CD8-positive, alpha-beta memory T cell (primary cell): ENCODE measurements at regions of chr6 and their contacts with region 1.

Region 1: GRCh38 chr6:132768051-132768517 is 10.4 kb upstream of the VNN2 start:
- DNase-seq: peak in 3 of 5 donors; percentile 2 to 49 (median 8)
- H3K4me3 ChIP-seq: no peak overlapping the region
- H3K4me3 Mint-ChIP-seq: peak overlapping the region in 2 of 7 donors; percentile 52 to 64
- H3K27ac ChIP-seq: no peak overlapping the region
- H3K27ac Mint-ChIP-seq: no peak overlapping the region
- H3K4me1 ChIP-seq: peaks cover 8% of the 10 kb centered on the region
- H3K4me1 Mint-ChIP-seq: peaks cover 12 to 19% (median 15%) of the 10 kb centered on the region in 3 donors
- H3K27me3 ChIP-seq: no peaks in the 10 kb centered on the region
- H3K27me3 Mint-ChIP-seq: no peaks in the 10 kb centered on the region

Region 2: GRCh38 chr6:132669690-132670291 is 98.3 kb before region 1 on chr6:
- CTCF ChIA-PET with region 1: interaction called, 26 read pairs
- POLR2A ChIA-PET with region 1: no interaction called
- DNase-seq: peak in 2 of 5 donors; percentile 24 to 30
- H3K4me3 ChIP-seq: no peak overlapping the region
- H3K4me3 Mint-ChIP-seq: peak overlapping the region in 1 of 7 donors; percentile 54
- H3K27ac ChIP-seq: no peak overlapping the region
- H3K27ac Mint-ChIP-seq: peak overlapping the region in 2 of 8 donors; percentile 25 to 68
- H3K4me1 ChIP-seq: no peaks in the 10 kb centered on the region
- H3K4me1 Mint-ChIP-seq: peaks cover 3 to 4% (median 3%) of the 10 kb centered on the region in 3 donors
- H3K27me3 ChIP-seq: no peaks in the 10 kb centered on the region
- H3K27me3 Mint-ChIP-seq: peaks cover 0 to 5% of the 10 kb centered on the region in 2 donors

Region 3: DNA sequence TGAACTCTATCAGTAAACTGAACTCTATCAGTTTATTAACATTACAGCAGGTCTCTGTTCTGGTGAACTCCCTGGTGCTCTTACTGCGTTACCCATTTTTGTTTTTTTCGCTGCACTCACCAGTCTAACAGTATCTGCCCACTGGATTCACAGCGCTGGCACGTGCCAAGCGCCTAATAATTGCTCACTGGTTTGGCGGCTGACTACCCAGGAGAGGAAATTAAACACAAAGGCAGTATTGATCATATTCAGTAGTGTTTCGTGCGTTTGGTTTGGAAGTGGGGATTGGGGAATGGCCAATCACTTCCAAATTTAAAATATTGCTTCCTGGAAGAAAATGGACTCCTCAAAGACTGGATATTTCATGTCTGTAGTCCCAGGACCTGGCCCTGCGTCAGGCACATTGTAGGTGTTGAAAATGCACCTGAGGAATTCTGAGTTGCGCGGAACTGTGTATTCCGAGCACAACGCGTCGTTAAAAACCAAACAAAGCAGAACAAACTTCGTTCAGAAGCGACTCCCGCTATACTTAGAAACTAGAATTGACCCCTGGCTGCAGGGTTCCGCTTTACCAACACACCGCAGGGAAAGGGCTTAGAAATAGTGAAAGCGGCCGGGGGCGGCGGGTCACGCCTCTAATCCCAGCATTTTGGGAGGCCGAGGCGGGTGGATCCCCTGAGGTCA is 45.2 kb after region 1 on chr6:
- CTCF ChIA-PET with region 1: interaction called, 7 read pairs
- POLR2A ChIA-PET with region 1: interaction called, 21 read pairs
- DNase-seq: peak; percentile 14 to 60 (median 56)
- H3K4me3 ChIP-seq: peak overlapping the region; percentile 61
- H3K4me3 Mint-ChIP-seq: peak overlapping the region; percentile 91 to 99 (median 98)
- H3K27ac ChIP-seq: peak overlapping the region; percentile 77
- H3K27ac Mint-ChIP-seq: peak overlapping the region; percentile 94 to 99 (median 98)
- H3K4me1 ChIP-seq: peaks cover 31% of the 10 kb centered on the region
- H3K4me1 Mint-ChIP-seq: peaks cover 44 to 58% (median 47%) of the 10 kb centered on the region in 3 donors
- H3K27me3 ChIP-seq: no peaks in the 10 kb centered on the region
- H3K27me3 Mint-ChIP-seq: peaks cover 0 to 7% of the 10 kb centered on the region in 2 donors